Naive thymus-derived CD4-positive, alpha-beta T cell (primary cell): ENCODE measurements at regions of chr22 and their contacts with region 1.

Region 1: GRCh38 chr22:50507991-50508884 is at the start of gene NCAPH2:
- DNase-seq: peak; percentile 95 to 99 (median 97)
- ATAC-seq: peak; percentile 86
- H3K4me3 ChIP-seq: peak within 1 kb of the TSS; percentile 91
- H3K4me3 Mint-ChIP-seq: peak within 1 kb of the TSS; percentile 88 to 97 (median 94)
- H3K27ac ChIP-seq: peak within 1 kb of the TSS; percentile 99
- H3K27ac Mint-ChIP-seq: peak within 1 kb of the TSS; percentile 89 to 99 (median 98)
- H3K4me1 ChIP-seq: peaks cover 19 to 26% of the 10 kb centered on the region in 2 donors
- H3K4me1 Mint-ChIP-seq: peaks cover 14 to 33% (median 27%) of the 10 kb centered on the region in 7 donors
- H3K27me3 ChIP-seq: no peaks in the 10 kb centered on the region
- H3K27me3 Mint-ChIP-seq: no peaks in the 10 kb centered on the region
- total RNA-seq, gene NCAPH2: 74.3 to 135 (median 91.1) TPM

Region 2: DNA sequence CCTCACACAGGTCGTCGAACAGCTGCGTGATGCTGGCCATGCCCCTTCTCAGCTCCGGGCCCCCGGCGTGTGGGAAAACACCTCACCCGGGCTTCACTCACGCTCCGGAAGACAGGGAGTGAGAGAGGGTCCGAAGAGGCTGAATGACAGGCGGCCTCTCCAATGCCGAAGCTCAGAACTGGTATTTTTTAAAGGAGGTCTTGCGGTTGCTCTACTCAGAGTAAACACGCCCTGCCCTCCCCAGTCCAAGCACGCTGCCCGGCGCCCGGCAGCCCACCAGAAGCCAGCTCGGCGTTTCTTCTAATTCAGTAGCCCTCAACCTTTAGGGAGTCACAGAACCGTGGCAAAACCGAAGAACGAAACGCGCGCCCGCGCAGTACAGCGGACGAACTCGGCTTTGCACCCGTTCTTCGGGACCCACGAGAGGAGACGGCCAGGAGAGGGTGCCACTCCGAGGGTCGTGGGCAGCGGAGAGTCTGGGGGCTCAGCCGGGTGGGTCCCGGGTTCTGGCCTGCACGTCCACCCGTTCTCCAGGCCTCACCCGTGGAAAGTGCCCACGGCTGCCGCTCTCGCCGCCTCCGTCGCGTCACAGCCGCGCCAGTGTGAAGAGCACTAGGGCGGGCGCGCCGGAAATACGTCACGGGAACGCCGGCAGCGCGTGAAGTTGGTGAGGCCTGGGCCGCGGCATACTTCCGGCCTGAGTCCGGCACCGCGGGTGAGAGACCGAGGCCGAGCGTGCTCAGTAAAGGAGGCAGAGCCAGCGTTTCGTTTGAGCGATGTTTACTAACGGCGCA is 263.6 kb before region 1 on chr22 and contains the start of gene TUBGCP6:
- CTCF ChIA-PET with region 1: no interaction called
- POLR2A ChIA-PET with region 1: interaction called, 8 read pairs
- intact Hi-C with region 1: loop called in 1 of 2 experiments (anchors 1 kb)
- DNase-seq: peak; percentile 88 to 95 (median 93)
- ATAC-seq: peak; percentile 88
- H3K4me3 ChIP-seq: peak within 1 kb of the TSS; percentile 73
- H3K4me3 Mint-ChIP-seq: peak within 1 kb of the TSS; percentile 76 to 100 (median 98)
- H3K27ac ChIP-seq: peak within 1 kb of the TSS; percentile 96
- H3K27ac Mint-ChIP-seq: peak within 1 kb of the TSS; percentile 91 to 100 (median 100)
- H3K4me1 ChIP-seq: peaks cover 39 to 51% of the 10 kb centered on the region in 2 donors
- H3K4me1 Mint-ChIP-seq: peaks cover 16 to 52% (median 40%) of the 10 kb centered on the region in 7 donors
- H3K27me3 ChIP-seq: no peaks in the 10 kb centered on the region
- H3K27me3 Mint-ChIP-seq: no peaks in the 10 kb centered on the region
- total RNA-seq, gene TUBGCP6: 67.8 to 146 (median 134) TPM

Region 3: GRCh38 chr22:50469377-50470305 is 38.6 kb before region 1 on chr22:
- CTCF ChIA-PET with region 1: interaction called, 7 read pairs
- POLR2A ChIA-PET with region 1: interaction called, 13 read pairs
- intact Hi-C with region 1: loop called (anchors 1 kb)
- DNase-seq: peak; percentile 77 to 96 (median 92)
- ATAC-seq: peak; percentile 95
- H3K4me3 ChIP-seq: peak overlapping the region; percentile 65
- H3K4me3 Mint-ChIP-seq: peak overlapping the region; percentile 76 to 100 (median 90)
- H3K27ac ChIP-seq: peak overlapping the region; percentile 90
- H3K27ac Mint-ChIP-seq: peak overlapping the region; percentile 88 to 99 (median 93)
- H3K4me1 ChIP-seq: peaks cover 53 to 57% of the 10 kb centered on the region in 2 donors
- H3K4me1 Mint-ChIP-seq: peaks cover 45 to 69% (median 61%) of the 10 kb centered on the region in 7 donors
- H3K27me3 ChIP-seq: no peaks in the 10 kb centered on the region
- H3K27me3 Mint-ChIP-seq: no peaks in the 10 kb centered on the region

Region 4: DNA sequence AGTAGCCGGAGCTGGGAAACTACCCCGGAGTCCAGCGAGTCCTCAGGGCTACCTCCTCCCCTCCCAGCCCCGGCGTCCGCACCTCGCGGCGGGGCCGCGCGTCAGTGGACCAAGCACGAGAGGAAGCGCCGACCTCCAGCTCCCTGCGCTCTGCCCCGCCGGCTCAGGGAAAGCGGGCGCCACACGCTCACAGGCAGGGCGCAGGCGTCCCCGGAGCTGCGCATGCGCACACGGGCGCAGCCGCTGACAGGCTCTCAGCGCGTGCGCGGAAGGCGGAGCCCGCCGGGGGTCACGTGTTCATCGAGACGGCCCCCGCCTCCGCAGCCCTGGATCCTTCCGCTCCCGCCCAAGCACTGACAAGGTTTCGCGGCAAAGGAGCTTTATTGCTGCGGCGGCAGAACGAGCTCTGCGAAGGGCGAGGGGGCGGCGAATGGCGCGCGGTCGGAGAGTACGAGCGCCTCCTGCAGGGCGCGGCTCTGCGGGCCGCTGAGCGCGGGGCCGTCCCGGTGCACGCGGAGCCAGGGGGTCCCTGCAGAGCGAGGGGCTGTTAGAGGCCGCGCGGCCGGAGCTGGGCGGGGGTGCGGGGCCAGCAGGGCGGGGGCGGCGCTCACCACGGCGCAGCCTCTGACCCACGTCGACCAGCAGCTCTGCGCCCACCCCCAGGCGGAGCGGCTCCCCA is 17.3 kb after region 1 on chr22 and contains the start of gene SCO2:
- CTCF ChIA-PET with region 1: interaction called, 25 read pairs
- POLR2A ChIA-PET with region 1: interaction called, 116 read pairs
- intact Hi-C with region 1: loop called (anchors 1 kb)
- DNase-seq: peak; percentile 97 to 99 (median 98)
- ATAC-seq: peak; percentile 77
- H3K4me3 ChIP-seq: peak within 1 kb of the TSS; percentile 77
- H3K4me3 Mint-ChIP-seq: peak within 1 kb of the TSS; percentile 77 to 96 (median 89)
- H3K27ac ChIP-seq: peak within 1 kb of the TSS; percentile 87
- H3K27ac Mint-ChIP-seq: peak within 1 kb of the TSS; percentile 78 to 93 (median 86)
- H3K4me1 ChIP-seq: peaks cover 14 to 21% of the 10 kb centered on the region in 2 donors
- H3K4me1 Mint-ChIP-seq: peaks cover 8 to 33% (median 26%) of the 10 kb centered on the region in 7 donors
- H3K27me3 ChIP-seq: no peaks in the 10 kb centered on the region
- H3K27me3 Mint-ChIP-seq: peaks cover 0 to 6% (median 0%) of the 10 kb centered on the region in 5 donors
- total RNA-seq, gene SCO2: 2.2 to 12.0 (median 5.5) TPM

Region 5: GRCh38 chr22:50537765-50538164 is 29.5 kb after region 1 on chr22:
- CTCF ChIA-PET with region 1: no interaction called
- POLR2A ChIA-PET with region 1: interaction called, 15 read pairs
- intact Hi-C with region 1: no loop called
- DNase-seq: no peak
- ATAC-seq: no peak
- H3K4me3 ChIP-seq: no peak overlapping the region
- H3K4me3 Mint-ChIP-seq: peak overlapping the region in 4 of 10 donors; percentile 5 to 65 (median 56)
- H3K27ac ChIP-seq: peak overlapping the region; percentile 99
- H3K27ac Mint-ChIP-seq: peak overlapping the region; percentile 74 to 100 (median 99)
- H3K4me1 ChIP-seq: peaks cover 14 to 24% of the 10 kb centered on the region in 2 donors
- H3K4me1 Mint-ChIP-seq: peaks cover 29 to 79% (median 41%) of the 10 kb centered on the region in 7 donors
- H3K27me3 ChIP-seq: no peaks in the 10 kb centered on the region
- H3K27me3 Mint-ChIP-seq: peaks cover 0 to 2% (median 0%) of the 10 kb centered on the region in 5 donors